ENCODE measurements at regions of chr11 and their contacts with region 1.

Region 1: DNA sequence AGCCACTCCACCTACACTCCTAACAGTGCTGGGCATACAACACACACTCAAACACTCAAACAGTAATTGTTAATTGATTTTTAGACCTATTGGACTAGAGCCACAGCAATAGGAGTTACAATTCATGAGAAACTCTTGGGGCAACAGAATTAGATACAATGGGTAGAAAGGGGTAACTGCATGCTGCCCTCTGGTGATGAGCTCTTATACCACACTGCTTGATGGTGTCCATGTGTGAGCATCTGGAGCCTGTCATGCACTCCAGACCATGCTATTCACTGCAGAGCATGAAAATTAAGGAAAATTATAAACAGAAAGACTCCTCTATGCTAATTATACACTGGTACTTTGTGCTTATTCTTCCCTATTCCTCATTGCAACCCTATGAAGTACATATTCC is 975.5 kb upstream of the CCDC90B start:
- DNase-seq: no peak
- ATAC-seq: peak; percentile 73
- H3K4me3 ChIP-seq: no peak overlapping the region
- H3K27ac ChIP-seq: no peak overlapping the region
- H3K4me1 ChIP-seq: no peaks in the 10 kb centered on the region
- H3K27me3 ChIP-seq: no peaks in the 10 kb centered on the region
- CTCF ChIP-seq: peak; percentile 44
- EP300 ChIP-seq: no peak
- POLR2A ChIP-seq: no peak
- RAD21 ChIP-seq: no peak

Region 2: DNA sequence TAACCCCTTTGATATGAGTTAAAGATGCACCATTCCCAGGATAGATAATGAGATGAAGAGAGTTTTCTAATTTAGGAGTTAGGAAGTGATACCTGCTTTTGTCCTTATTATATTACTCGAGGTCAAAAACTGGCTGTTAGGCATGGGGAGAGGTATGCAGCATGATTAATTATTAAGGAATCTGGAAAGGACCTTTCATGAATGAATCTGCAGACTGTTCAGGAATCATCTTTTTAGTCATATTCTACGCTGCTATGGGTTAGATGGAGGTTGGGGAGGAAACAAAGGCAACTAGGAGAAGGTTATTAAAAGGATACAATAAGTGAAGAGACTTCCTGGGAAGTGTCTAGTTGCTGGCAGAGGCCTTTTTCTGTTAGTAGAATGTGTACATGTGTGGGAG is 483.1 kb before region 1 on chr11:
- CTCF ChIA-PET with region 1: no interaction called
- POLR2A ChIA-PET with region 1: no interaction called
- in situ Hi-C with region 1: no loop called
- intact Hi-C with region 1: no loop called
- DNase-seq: no peak
- ATAC-seq: no peak
- H3K4me3 ChIP-seq: no peak overlapping the region
- H3K27ac ChIP-seq: no peak overlapping the region
- H3K4me1 ChIP-seq: no peaks in the 10 kb centered on the region
- H3K27me3 ChIP-seq: no peaks in the 10 kb centered on the region
- CTCF ChIP-seq: no peak
- EP300 ChIP-seq: no peak
- POLR2A ChIP-seq: no peak
- RAD21 ChIP-seq: no peak

Region 3: GRCh38 chr11:83827940-83828554 is 433.7 kb before region 1 on chr11:
- CTCF ChIA-PET with region 1: no interaction called
- POLR2A ChIA-PET with region 1: no interaction called
- in situ Hi-C with region 1: loop called (anchors 10 kb)
- intact Hi-C with region 1: loop called (anchors 1 kb)
- DNase-seq: peak; percentile 42
- ATAC-seq: peak; percentile 84
- H3K4me3 ChIP-seq: peak overlapping the region; percentile 14 to 36 (median 26); a peak in 2 of 6 replicates
- H3K27ac ChIP-seq: no peak overlapping the region
- H3K4me1 ChIP-seq: no peaks in the 10 kb centered on the region
- H3K27me3 ChIP-seq: no peaks in the 10 kb centered on the region
- CTCF ChIP-seq: peak; percentile 74
- EP300 ChIP-seq: no peak
- POLR2A ChIP-seq: no peak
- RAD21 ChIP-seq: peak; percentile 64

Region 4: GRCh38 chr11:83990160-83990733 is 271.5 kb before region 1 on chr11:
- CTCF ChIA-PET with region 1: no interaction called
- POLR2A ChIA-PET with region 1: no interaction called
- in situ Hi-C with region 1: no loop called
- intact Hi-C with region 1: no loop called
- DNase-seq: no peak
- ATAC-seq: no peak
- H3K4me3 ChIP-seq: no peak overlapping the region
- H3K27ac ChIP-seq: no peak overlapping the region
- H3K4me1 ChIP-seq: no peaks in the 10 kb centered on the region
- H3K27me3 ChIP-seq: no peaks in the 10 kb centered on the region
- CTCF ChIP-seq: no peak
- EP300 ChIP-seq: no peak
- POLR2A ChIP-seq: no peak
- RAD21 ChIP-seq: no peak

Region 5: GRCh38 chr11:84249344-84250136 is 12.2 kb before region 1 on chr11:
- CTCF ChIA-PET with region 1: no interaction called
- POLR2A ChIA-PET with region 1: no interaction called
- in situ Hi-C with region 1: no loop called
- intact Hi-C with region 1: no loop called
- DNase-seq: no peak
- ATAC-seq: no peak; the same call in 2 of the 3 replicates
- H3K4me3 ChIP-seq: no peak overlapping the region
- H3K27ac ChIP-seq: no peak overlapping the region
- H3K4me1 ChIP-seq: peaks cover 17% of the 10 kb centered on the region
- H3K27me3 ChIP-seq: no peaks in the 10 kb centered on the region; a peak in 1 of 5 replicates
- CTCF ChIP-seq: no peak
- EP300 ChIP-seq: no peak
- POLR2A ChIP-seq: no peak
- RAD21 ChIP-seq: no peak